Mammary epithelial cell (primary cell): ENCODE measurements at regions of chr1 and their contacts with region 1.

Region 1: DNA sequence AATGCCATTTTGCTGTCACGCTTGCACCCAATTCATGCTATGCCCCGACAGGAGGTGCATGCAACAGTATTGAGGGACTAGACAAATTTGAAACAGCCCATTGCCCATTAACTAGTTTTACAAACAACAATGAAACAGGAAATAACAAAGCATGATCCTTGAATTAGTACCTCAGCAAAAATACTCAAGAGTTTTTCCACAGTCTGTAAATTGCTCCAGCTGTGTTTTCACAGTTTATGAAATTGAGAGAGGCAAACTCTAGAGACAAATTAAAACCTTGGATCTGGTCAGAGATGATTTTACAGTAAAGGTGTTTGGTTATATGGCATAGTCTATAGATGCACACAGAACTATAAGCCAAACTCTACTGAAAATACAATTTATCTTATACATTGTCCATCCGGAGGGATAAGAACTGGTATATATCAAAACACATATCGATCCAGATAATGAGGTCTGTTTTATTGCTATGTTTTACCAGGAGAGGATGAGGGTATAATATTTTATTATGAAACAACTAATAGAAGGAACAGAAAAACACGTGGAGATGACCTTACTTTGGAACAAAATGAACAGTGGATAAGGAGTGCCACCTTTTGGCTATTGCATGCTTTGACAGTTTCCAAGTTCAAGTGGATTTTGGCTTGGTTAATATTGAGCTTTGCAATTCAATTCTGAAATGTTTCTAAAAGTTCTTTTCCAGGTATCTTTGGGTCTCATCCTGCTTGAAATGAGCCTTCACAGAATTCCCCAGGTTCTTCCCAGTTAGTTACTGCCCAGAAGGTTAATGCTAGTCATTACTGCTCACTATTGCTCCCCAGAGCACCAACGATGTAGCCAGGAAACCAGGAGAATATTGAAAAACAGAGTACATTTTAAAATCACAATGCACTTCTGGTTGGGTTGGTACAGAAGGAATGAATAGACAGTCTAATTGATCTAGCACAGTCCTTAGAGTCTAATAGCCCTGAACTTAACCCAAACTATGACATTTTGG is 45.7 kb downstream of the ZC3H11B start:
- DNase-seq: peak; percentile 17
- H3K4me3 ChIP-seq: no peak overlapping the region
- H3K27ac ChIP-seq: no peak overlapping the region
- H3K4me1 ChIP-seq: no peaks in the 10 kb centered on the region
- H3K27me3 ChIP-seq: peaks cover 5% of the 10 kb centered on the region
- CTCF ChIP-seq: peak; percentile 55 to 67

Region 2: DNA sequence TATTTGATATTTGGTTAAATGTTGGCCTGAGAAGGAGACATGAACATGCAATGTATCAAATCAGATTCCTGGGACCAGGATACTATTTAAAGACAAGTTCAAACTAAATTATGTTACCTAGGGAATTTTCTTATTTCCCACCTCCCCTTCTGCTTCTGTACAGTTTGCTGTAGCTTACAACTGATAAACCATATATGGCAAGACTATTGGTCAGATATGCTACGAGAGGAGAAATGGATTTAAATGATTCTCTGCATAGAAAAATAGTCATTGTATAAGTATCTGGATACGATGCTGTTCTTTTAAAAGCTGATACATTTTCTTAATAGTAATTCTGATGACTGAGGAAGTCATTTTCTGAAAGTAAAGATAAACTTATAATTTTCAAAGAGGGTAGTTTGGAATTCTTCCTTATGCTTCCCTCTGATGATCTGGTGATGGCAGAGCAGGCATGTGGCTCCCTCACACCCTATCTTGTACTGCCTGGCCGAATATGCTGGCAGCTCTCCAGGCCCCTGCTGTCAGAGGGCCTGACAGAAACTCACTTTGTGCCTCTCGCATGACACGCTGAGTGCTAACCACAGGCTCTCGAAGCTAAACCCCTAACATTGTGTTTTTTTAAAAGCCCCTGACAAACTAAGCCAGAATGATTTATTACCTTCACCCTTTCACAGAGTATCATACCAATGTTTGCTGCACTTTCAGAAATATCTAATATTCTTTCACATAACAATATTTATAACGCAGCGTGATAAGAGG is 1262.8 kb before region 1 on chr1:
- CTCF ChIA-PET with region 1: no interaction called
- dilution Hi-C with region 1: no loop called
- in situ Hi-C with region 1: loop called in 1 of 2 experiments (anchors 25 kb)
- intact Hi-C with region 1: no loop called
- DNase-seq: peak; percentile 5
- H3K4me3 ChIP-seq: no peak overlapping the region
- H3K27ac ChIP-seq: no peak overlapping the region
- H3K4me1 ChIP-seq: no peaks in the 10 kb centered on the region
- H3K27me3 ChIP-seq: no peaks in the 10 kb centered on the region
- CTCF ChIP-seq: no peak

Region 3: GRCh38 chr1:218330043-218330623 is 1237.1 kb before region 1 on chr1:
- CTCF ChIA-PET with region 1: no interaction called
- dilution Hi-C with region 1: no loop called
- in situ Hi-C with region 1: loop called in 1 of 2 experiments (anchors 25 kb)
- intact Hi-C with region 1: loop called (anchors 10 kb)
- DNase-seq: peak; percentile 18
- H3K4me3 ChIP-seq: no peak overlapping the region
- H3K27ac ChIP-seq: no peak overlapping the region
- H3K4me1 ChIP-seq: no peaks in the 10 kb centered on the region
- H3K27me3 ChIP-seq: no peaks in the 10 kb centered on the region
- CTCF ChIP-seq: peak; percentile 51

Region 4: DNA sequence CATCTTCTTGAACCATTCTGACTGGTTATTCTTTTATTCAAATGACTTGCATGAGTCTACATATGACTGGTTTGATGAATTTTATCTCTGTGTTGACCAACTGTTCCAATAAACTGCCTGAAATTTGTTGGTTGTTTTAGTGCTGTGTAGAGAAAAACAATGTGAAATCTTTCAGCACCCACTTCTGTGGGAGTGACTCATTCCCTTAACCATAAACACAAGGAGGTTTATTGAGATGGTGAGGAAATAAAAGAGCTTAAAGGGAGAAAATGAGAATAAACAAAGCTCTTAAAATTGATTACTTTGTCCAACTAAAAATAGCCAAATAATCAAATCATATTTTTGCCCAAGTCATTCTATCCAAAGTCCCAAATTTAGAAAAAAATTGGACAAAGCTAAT is 881.0 kb before region 1 on chr1:
- CTCF ChIA-PET with region 1: no interaction called
- dilution Hi-C with region 1: no loop called
- in situ Hi-C with region 1: no loop called
- intact Hi-C with region 1: loop called (anchors 10 kb)
- DNase-seq: peak; percentile 57
- H3K4me3 ChIP-seq: no peak overlapping the region
- H3K27ac ChIP-seq: no peak overlapping the region
- H3K4me1 ChIP-seq: peaks cover 14% of the 10 kb centered on the region
- H3K27me3 ChIP-seq: no peaks in the 10 kb centered on the region
- CTCF ChIP-seq: no peak

Region 5: DNA sequence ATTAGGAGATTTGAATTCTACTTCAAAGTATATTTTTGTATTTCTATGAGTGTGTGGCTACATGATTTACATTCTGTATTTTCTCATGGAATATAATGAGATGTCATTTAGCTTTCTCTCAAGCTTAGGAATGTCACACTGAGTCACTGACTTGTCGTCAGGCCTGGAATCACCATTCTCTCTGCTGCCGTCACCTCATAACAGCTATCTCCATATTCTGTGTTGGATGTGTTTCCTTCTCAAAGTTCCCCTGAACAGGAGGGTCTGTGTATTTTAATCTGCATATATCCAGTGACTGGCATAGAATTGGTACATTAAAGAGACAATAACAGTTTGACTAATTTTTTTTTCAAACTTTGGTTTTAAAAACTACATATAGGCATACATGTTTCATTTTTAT is 357.7 kb before region 1 on chr1:
- CTCF ChIA-PET with region 1: no interaction called
- dilution Hi-C with region 1: no loop called
- in situ Hi-C with region 1: no loop called
- intact Hi-C with region 1: loop called (anchors 10 kb)
- DNase-seq: no peak
- H3K4me3 ChIP-seq: no peak overlapping the region
- H3K27ac ChIP-seq: no peak overlapping the region
- H3K4me1 ChIP-seq: no peaks in the 10 kb centered on the region
- H3K27me3 ChIP-seq: no peaks in the 10 kb centered on the region
- CTCF ChIP-seq: no peak

Region 6: GRCh38 chr1:219304227-219305226 is 262.7 kb before region 1 on chr1:
- CTCF ChIA-PET with region 1: no interaction called
- dilution Hi-C with region 1: no loop called
- in situ Hi-C with region 1: no loop called
- intact Hi-C with region 1: loop called (anchors 1 kb)
- DNase-seq: peak; percentile 43
- H3K4me3 ChIP-seq: no peak overlapping the region
- H3K27ac ChIP-seq: no peak overlapping the region
- H3K4me1 ChIP-seq: peaks cover 7% of the 10 kb centered on the region
- H3K27me3 ChIP-seq: peaks cover 32% of the 10 kb centered on the region
- CTCF ChIP-seq: peak; percentile 23 to 49

Region 7: GRCh38 chr1:219495737-219496408 is 71.4 kb before region 1 on chr1:
- CTCF ChIA-PET with region 1: no interaction called
- dilution Hi-C with region 1: no loop called
- in situ Hi-C with region 1: no loop called
- intact Hi-C with region 1: no loop called
- DNase-seq: no peak
- H3K4me3 ChIP-seq: no peak overlapping the region
- H3K27ac ChIP-seq: no peak overlapping the region
- H3K4me1 ChIP-seq: no peaks in the 10 kb centered on the region
- H3K27me3 ChIP-seq: no peaks in the 10 kb centered on the region
- CTCF ChIP-seq: no peak

Region 8: DNA sequence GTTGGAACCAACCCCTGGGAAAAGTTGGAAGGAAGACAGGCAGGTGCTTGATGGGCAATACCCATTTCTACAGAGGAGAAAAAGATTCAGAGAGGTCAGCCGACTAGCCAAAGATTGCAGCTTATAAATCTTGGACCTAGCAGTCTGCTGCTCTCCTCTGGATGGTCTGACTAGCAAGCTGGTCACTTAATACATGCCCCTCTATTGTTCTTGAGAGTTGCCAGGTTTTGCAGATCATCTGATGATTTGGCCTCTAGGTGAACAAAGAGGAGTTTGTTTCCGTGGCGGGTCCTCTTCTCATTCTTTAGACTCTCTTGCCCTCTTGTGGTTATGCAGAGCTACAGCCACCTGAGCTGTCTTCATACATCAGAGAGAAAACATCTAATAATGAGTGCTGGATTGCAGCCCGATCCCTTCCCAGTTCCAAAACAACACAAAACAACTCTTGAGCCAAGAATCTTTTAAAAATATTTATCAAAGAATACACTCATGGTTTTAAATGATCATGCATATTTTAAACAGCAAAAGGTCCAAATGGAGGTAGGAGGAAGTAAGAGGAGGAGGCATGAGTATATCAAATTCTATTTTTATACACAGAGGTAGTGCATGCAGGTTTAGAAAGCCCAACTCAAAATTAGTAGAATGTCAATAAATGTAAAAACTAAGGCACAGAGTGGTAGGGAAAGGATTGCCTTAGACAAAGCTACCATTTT is 245.4 kb after region 1 on chr1:
- CTCF ChIA-PET with region 1: interaction called, 6 read pairs
- dilution Hi-C with region 1: no loop called
- in situ Hi-C with region 1: no loop called
- intact Hi-C with region 1: loop called (anchors 1 kb)
- DNase-seq: peak; percentile 63
- H3K4me3 ChIP-seq: no peak overlapping the region
- H3K27ac ChIP-seq: no peak overlapping the region
- H3K4me1 ChIP-seq: no peaks in the 10 kb centered on the region
- H3K27me3 ChIP-seq: peaks cover 21% of the 10 kb centered on the region
- CTCF ChIP-seq: peak; percentile 87 to 94